ENCODE measurements at regions of chr7 and their contacts with region 1.

Region 1: GRCh38 chr7:121994625-121995410 is 121.9 kb downstream of the PTPRZ1 start:
- DNase-seq: peak; percentile 74
- H3K4me3 Mint-ChIP-seq: no peak overlapping the region
- H3K27ac Mint-ChIP-seq: no peak overlapping the region
- H3K4me1 Mint-ChIP-seq: no peaks in the 10 kb centered on the region
- H3K27me3 Mint-ChIP-seq: no peaks in the 10 kb centered on the region
- CTCF ChIP-seq: peak; percentile 68

Region 2: GRCh38 chr7:121126801-121127534 is 867.9 kb before region 1 on chr7:
- CTCF ChIA-PET with region 1: no interaction called
- intact Hi-C with region 1: loop called (anchors 1 kb)
- DNase-seq: no peak
- H3K4me3 Mint-ChIP-seq: no peak overlapping the region
- H3K27ac Mint-ChIP-seq: no peak overlapping the region
- H3K4me1 Mint-ChIP-seq: no peaks in the 10 kb centered on the region
- H3K27me3 Mint-ChIP-seq: no peaks in the 10 kb centered on the region
- CTCF ChIP-seq: no peak

Region 3: GRCh38 chr7:121366852-121367431 is 627.9 kb before region 1 on chr7:
- CTCF ChIA-PET with region 1: interaction called, 7 read pairs
- intact Hi-C with region 1: loop called (anchors 2 kb)
- DNase-seq: peak; percentile 15
- H3K4me3 Mint-ChIP-seq: no peak overlapping the region
- H3K27ac Mint-ChIP-seq: no peak overlapping the region
- H3K4me1 Mint-ChIP-seq: peaks cover 28% of the 10 kb centered on the region
- H3K27me3 Mint-ChIP-seq: no peaks in the 10 kb centered on the region
- CTCF ChIP-seq: peak; percentile 39

Region 4: GRCh38 chr7:121605317-121605680 is 389.5 kb before region 1 on chr7:
- CTCF ChIA-PET with region 1: interaction called, 68 read pairs
- intact Hi-C with region 1: loop called (anchors 1 kb)
- DNase-seq: peak; percentile 17
- H3K4me3 Mint-ChIP-seq: no peak overlapping the region
- H3K27ac Mint-ChIP-seq: peak overlapping the region; percentile 43
- H3K4me1 Mint-ChIP-seq: peaks cover 25% of the 10 kb centered on the region
- H3K27me3 Mint-ChIP-seq: no peaks in the 10 kb centered on the region
- CTCF ChIP-seq: peak; percentile 24

Region 5: GRCh38 chr7:121714559-121715303 is 280.1 kb before region 1 on chr7:
- CTCF ChIA-PET with region 1: interaction called, 15 read pairs
- intact Hi-C with region 1: no loop called
- DNase-seq: peak; percentile 67
- H3K4me3 Mint-ChIP-seq: peak overlapping the region; percentile 64
- H3K27ac Mint-ChIP-seq: peak overlapping the region; percentile 91
- H3K4me1 Mint-ChIP-seq: peaks cover 27% of the 10 kb centered on the region
- H3K27me3 Mint-ChIP-seq: no peaks in the 10 kb centered on the region
- CTCF ChIP-seq: no peak

Region 6: DNA sequence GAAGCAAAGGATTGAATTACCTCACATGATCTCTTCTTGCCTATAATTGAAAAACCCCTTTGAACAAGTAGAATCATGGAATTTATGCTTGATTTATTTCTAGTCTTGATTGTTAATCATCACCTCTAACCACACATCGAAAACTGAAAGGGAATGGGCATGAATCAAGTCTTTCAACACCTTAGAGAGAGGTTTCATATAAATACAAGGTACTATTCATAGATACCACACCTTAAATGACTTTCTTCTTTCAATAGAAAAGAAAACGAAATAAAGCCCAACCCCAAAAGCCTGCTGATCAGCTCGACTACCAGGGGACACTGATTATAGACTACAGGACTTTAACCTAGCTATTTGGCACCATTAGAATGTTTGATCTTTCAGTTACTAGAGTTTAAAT is 250.5 kb before region 1 on chr7:
- CTCF ChIA-PET with region 1: interaction called, 7 read pairs
- intact Hi-C with region 1: loop called (anchors 5 kb)
- DNase-seq: peak; percentile 25
- H3K4me3 Mint-ChIP-seq: peak overlapping the region; percentile 67
- H3K27ac Mint-ChIP-seq: peak overlapping the region; percentile 99
- H3K4me1 Mint-ChIP-seq: peaks cover 38% of the 10 kb centered on the region
- H3K27me3 Mint-ChIP-seq: no peaks in the 10 kb centered on the region
- CTCF ChIP-seq: no peak

Region 7: DNA sequence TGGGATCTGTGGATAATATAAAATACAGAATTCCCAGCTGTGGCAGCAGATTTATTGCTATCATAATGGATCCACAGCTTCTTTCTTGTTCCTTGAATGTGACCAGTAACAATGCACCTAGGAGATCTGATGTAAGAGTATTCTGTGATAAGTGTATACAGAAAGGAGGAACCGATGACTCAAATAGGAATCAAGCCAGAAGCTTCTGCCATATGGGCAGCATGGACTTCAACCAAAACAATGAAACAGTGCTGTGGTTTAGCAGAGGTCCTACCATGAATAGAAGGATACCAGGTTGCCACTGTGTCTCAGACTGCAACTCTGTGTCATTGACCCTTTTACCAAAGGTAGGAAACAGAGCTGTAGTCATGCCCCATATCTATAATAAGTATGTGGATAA is 40.0 kb before region 1 on chr7:
- CTCF ChIA-PET with region 1: no interaction called
- intact Hi-C with region 1: no loop called
- DNase-seq: no peak
- H3K4me3 Mint-ChIP-seq: no peak overlapping the region
- H3K27ac Mint-ChIP-seq: no peak overlapping the region
- H3K4me1 Mint-ChIP-seq: no peaks in the 10 kb centered on the region
- H3K27me3 Mint-ChIP-seq: no peaks in the 10 kb centered on the region
- CTCF ChIP-seq: no peak

Region 8: GRCh38 chr7:122067077-122067476 is 72.3 kb after region 1 on chr7:
- CTCF ChIA-PET with region 1: no interaction called
- intact Hi-C with region 1: no loop called
- DNase-seq: no peak
- H3K4me3 Mint-ChIP-seq: no peak overlapping the region
- H3K27ac Mint-ChIP-seq: no peak overlapping the region
- H3K4me1 Mint-ChIP-seq: peaks cover 6% of the 10 kb centered on the region
- H3K27me3 Mint-ChIP-seq: no peaks in the 10 kb centered on the region
- CTCF ChIP-seq: no peak

Measured in Calu3 (cell line).